Heart right ventricle (tissue), 16 donors: ENCODE measurements at regions of chrX and their contacts with region 1.

Region 1: GRCh38 chrX:48021026-48021900 is 14.5 kb downstream of the SPACA5 start:
- DNase-seq: peak; percentile 80 to 82
- ATAC-seq: peak; percentile 80 to 93 (median 90)
- H3K4me3 ChIP-seq: peak overlapping the region; percentile 34 to 66 (median 58)
- H3K27ac ChIP-seq: peak overlapping the region; percentile 71 to 96 (median 92)
- H3K4me1 ChIP-seq: peaks cover 0 to 11% (median 0%) of the 10 kb centered on the region in 9 donors
- H3K27me3 ChIP-seq: no peaks in the 10 kb centered on the region
- CTCF ChIP-seq: no peak

Region 2: DNA sequence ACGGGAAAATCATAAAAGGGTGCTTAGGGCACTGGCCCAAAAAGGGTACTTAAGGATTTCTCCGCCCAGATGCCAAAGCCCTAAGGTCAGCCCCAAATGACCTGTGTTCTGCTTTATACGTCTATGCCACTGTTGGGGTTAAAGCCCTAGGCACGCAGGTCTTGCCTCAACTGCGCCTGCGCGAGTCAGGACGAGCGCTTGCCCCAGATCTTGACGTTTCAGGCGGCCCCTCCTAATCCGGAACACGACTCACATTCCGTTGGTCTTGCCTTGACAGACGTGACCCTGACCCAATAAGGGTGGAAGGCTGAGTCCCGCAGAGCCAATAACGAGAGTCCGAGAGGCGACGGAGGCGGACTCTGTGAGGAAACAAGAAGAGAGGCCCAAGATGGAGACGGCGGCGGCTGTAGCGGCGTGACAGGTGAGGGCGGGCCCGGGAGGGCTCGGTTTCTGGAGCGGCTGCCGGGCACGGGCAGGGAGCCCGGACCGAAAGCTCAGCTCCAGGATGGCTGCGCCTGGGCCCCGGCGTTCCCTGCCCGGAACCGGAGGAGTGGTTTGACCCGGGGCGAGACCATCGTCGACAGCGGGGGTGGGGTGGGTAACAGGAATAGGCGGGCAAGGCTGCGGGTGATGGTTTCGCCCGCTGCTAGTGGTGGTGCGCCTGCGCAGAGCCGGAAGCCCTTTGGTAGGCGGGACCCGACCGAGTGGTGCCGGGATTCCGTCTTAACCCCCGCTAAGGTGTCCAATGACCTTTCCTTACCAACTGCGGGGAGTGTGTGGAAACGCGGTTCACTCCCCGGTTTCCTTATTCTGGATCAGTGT is 460.2 kb before region 1 on chrX and contains the start of gene ARAF:
- intact Hi-C with region 1: loop called in 1 of 10 experiments (anchors 10 kb)
- DNase-seq: peak; percentile 92 to 98
- ATAC-seq: peak; percentile 93 to 96 (median 95)
- H3K4me3 ChIP-seq: peak within 1 kb of the TSS; percentile 41 to 77 (median 68)
- H3K27ac ChIP-seq: peak within 1 kb of the TSS; percentile 90 to 99 (median 96)
- H3K4me1 ChIP-seq: peaks cover 0 to 40% (median 10%) of the 10 kb centered on the region in 9 donors
- H3K27me3 ChIP-seq: no peaks in the 10 kb centered on the region
- CTCF ChIP-seq: no peak
- total RNA-seq, gene ARAF: 73.0 to 93.1 (median 79.8) TPM

Region 3: GRCh38 chrX:47650164-47651042 is 370.9 kb before region 1 on chrX and contains the start of gene ELK1:
- intact Hi-C with region 1: loop called in 4 of 10 experiments (anchors 10 kb)
- DNase-seq: peak; percentile 91 to 96
- ATAC-seq: peak; percentile 95 to 98 (median 97)
- H3K4me3 ChIP-seq: peak within 1 kb of the TSS; percentile 46 to 78 (median 68)
- H3K27ac ChIP-seq: peak within 1 kb of the TSS; percentile 40 to 89 (median 82)
- H3K4me1 ChIP-seq: peaks cover 0 to 29% (median 8%) of the 10 kb centered on the region in 9 donors
- H3K27me3 ChIP-seq: no peaks in the 10 kb centered on the region
- CTCF ChIP-seq: peak in 1 of 9 donors; percentile 3
- total RNA-seq, gene ELK1: 22.1 to 31.1 (median 24.8) TPM

Region 4: DNA sequence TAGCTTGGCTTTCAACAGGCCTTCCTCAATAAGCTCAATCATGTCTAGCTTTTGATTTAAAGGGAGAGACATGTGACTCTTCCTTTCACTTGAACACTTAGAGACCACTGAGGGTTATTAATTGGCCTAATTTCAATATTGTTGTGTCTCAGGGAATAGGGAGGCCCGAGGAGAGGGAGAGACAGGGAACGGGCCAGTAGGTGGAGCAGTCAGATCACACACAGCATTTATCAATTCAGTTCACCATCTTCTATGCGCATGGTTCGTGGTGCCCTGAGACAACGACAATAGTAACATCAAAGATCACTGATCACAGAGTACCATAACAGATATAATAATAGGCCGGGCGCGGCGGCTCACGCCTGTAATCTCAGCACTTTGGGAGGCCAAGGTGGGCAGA is 166.8 kb before region 1 on chrX:
- intact Hi-C with region 1: loop called in 4 of 10 experiments (anchors 5 kb)
- DNase-seq: peak in 1 of 2 donors; percentile 16
- ATAC-seq: peak in 5 of 8 donors; percentile 49 to 70 (median 62)
- H3K4me3 ChIP-seq: no peak overlapping the region
- H3K27ac ChIP-seq: no peak overlapping the region
- H3K4me1 ChIP-seq: no peaks in the 10 kb centered on the region
- H3K27me3 ChIP-seq: peaks cover 0 to 7% (median 0%) of the 10 kb centered on the region in 7 donors
- CTCF ChIP-seq: peak in 8 of 9 donors; percentile 9 to 58 (median 42)